Activated naive CD4-positive, alpha-beta T cell treated with anti-CD3 and anti-CD28 coated beads, Interleukin-2, amount 10 ng/mL, durations not matched to agents 7 days and 5 days (primary cell): ENCODE measurements at regions of chr17 and their contacts with region 1.

Region 1: GRCh38 chr17:46044286-46044928 is 45.4 kb downstream of the STH start:
- DNase-seq: peak; percentile 71
- H3K4me3 Mint-ChIP-seq: no peak overlapping the region
- H3K27ac Mint-ChIP-seq: no peak overlapping the region
- H3K4me1 Mint-ChIP-seq: peaks cover 3% of the 10 kb centered on the region
- H3K27me3 Mint-ChIP-seq: no peaks in the 10 kb centered on the region

Region 2: DNA sequence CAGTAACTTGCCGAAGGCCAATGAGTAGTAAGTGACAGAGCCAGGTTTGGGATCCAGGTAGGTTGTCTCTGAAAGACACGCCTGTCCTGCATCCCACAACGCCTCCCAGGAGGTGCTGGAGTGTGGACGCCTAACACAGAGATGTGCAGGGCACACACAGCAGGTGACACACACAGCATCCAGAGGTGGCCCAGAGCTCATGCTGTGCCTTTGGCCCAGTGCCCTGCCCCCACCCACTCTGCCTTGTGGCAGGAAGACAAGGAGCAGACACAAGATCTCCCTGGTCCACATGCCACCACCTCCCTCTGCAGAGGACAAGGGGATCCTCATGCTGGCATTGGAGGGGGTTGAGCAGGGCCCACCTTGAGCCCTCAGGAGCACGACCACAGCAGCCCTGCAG is 60.0 kb before region 1 on chr17:
- CTCF ChIA-PET with region 1: no interaction called
- DNase-seq: no peak
- H3K4me3 Mint-ChIP-seq: no peak overlapping the region
- H3K27ac Mint-ChIP-seq: no peak overlapping the region
- H3K4me1 Mint-ChIP-seq: no peaks in the 10 kb centered on the region
- H3K27me3 Mint-ChIP-seq: peaks cover 20% of the 10 kb centered on the region

Region 3: GRCh38 chr17:46002311-46002972 is 42.0 kb before region 1 on chr17:
- CTCF ChIA-PET with region 1: interaction called, 18 read pairs
- DNase-seq: peak; percentile 80
- H3K4me3 Mint-ChIP-seq: no peak overlapping the region
- H3K27ac Mint-ChIP-seq: no peak overlapping the region
- H3K4me1 Mint-ChIP-seq: no peaks in the 10 kb centered on the region
- H3K27me3 Mint-ChIP-seq: peaks cover 18% of the 10 kb centered on the region

Region 4: DNA sequence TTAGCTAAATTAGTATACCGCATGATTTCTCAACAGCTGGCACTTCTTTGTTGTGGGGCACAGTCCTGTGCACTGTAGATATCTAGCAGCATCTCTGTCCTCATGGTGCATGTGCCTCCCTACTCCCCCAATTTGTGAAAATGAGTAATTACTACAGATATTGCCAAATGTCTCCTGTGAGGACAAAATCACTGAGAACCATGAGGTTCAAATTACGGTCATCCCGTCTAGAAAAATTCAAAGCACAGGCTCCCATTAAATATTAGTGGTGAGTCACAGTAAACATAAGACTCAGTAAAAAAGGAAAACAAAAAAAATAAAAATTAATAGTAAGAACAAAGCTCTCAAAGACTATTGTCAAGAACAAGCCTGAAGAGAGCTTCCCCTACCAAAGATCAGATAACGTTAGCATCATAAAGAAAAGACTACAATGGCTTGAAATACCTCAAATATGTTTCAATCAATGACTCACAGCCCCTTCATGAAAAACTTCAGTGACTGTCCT is 12.4 kb after region 1 on chr17:
- CTCF ChIA-PET with region 1: interaction called, 22 read pairs
- DNase-seq: no peak
- H3K4me3 Mint-ChIP-seq: no peak overlapping the region
- H3K27ac Mint-ChIP-seq: no peak overlapping the region
- H3K4me1 Mint-ChIP-seq: peaks cover 12% of the 10 kb centered on the region
- H3K27me3 Mint-ChIP-seq: no peaks in the 10 kb centered on the region

Region 5: GRCh38 chr17:46125831-46126230 is 81.4 kb after region 1 on chr17:
- CTCF ChIA-PET with region 1: no interaction called
- DNase-seq: no peak
- H3K4me3 Mint-ChIP-seq: no peak overlapping the region
- H3K27ac Mint-ChIP-seq: no peak overlapping the region
- H3K4me1 Mint-ChIP-seq: peaks cover 50% of the 10 kb centered on the region
- H3K27me3 Mint-ChIP-seq: no peaks in the 10 kb centered on the region

Region 6: GRCh38 chr17:46193151-46193625 is 148.8 kb after region 1 on chr17 and contains the start of gene KANSL1:
- CTCF ChIA-PET with region 1: interaction called, 23 read pairs
- DNase-seq: peak; percentile 92
- H3K4me3 Mint-ChIP-seq: peak within 1 kb of the TSS; percentile 89
- H3K27ac Mint-ChIP-seq: peak within 1 kb of the TSS; percentile 98
- H3K4me1 Mint-ChIP-seq: peaks cover 67% of the 10 kb centered on the region
- H3K27me3 Mint-ChIP-seq: no peaks in the 10 kb centered on the region

Region 7: GRCh38 chr17:46212634-46213435 is 168.4 kb after region 1 on chr17:
- CTCF ChIA-PET with region 1: interaction called, 50 read pairs
- DNase-seq: peak; percentile 77
- H3K4me3 Mint-ChIP-seq: no peak overlapping the region
- H3K27ac Mint-ChIP-seq: no peak overlapping the region
- H3K4me1 Mint-ChIP-seq: peaks cover 20% of the 10 kb centered on the region
- H3K27me3 Mint-ChIP-seq: no peaks in the 10 kb centered on the region